ENCODE measurements at regions of chr13 and their contacts with region 1.

Region 1: GRCh38 chr13:41054212-41054877 is 7.0 kb upstream of the WBP4 start:
- DNase-seq: peak; percentile 24
- H3K4me3 Mint-ChIP-seq: no peak overlapping the region
- H3K27ac Mint-ChIP-seq: no peak overlapping the region
- H3K4me1 Mint-ChIP-seq: peaks cover 47% of the 10 kb centered on the region
- H3K27me3 Mint-ChIP-seq: no peaks in the 10 kb centered on the region

Region 2: GRCh38 chr13:40974460-40975407 is 79.6 kb before region 1 on chr13:
- intact Hi-C with region 1: loop called (anchors 1 kb)
- DNase-seq: no peak
- H3K4me3 Mint-ChIP-seq: peak overlapping the region; percentile 45
- H3K27ac Mint-ChIP-seq: peak overlapping the region; percentile 18
- H3K4me1 Mint-ChIP-seq: peaks cover 94% of the 10 kb centered on the region
- H3K27me3 Mint-ChIP-seq: no peaks in the 10 kb centered on the region